BJ (cell line): ENCODE measurements at regions of chr19 and their contacts with region 1.

Region 1: GRCh38 chr19:54029930-54030490 is 33.7 kb downstream of the VSTM1 start:
- DNase-seq: no peak
- H3K4me3 ChIP-seq: no peak overlapping the region
- H3K27me3 ChIP-seq: no peaks in the 10 kb centered on the region; the same call in 1 of the 2 replicates
- CTCF ChIP-seq: peak; percentile 77

Region 2: GRCh38 chr19:54041969-54042606 is 12.1 kb after region 1 on chr19:
- CTCF ChIA-PET with region 1: interaction called, 20 read pairs
- POLR2A ChIA-PET with region 1: no interaction called
- DNase-seq: no peak
- H3K4me3 ChIP-seq: no peak overlapping the region
- H3K27me3 ChIP-seq: no peaks in the 10 kb centered on the region
- CTCF ChIP-seq: no peak